ENCODE measurements at regions of chr20 and their contacts with region 1.

Region 1: GRCh38 chr20:58388882-58389323 is at the start of gene VAPB:
- DNase-seq: peak; percentile 95
- ATAC-seq: peak; percentile 99
- H3K4me3 ChIP-seq: peak within 1 kb of the TSS; percentile 77 to 95 (median 88)
- H3K27ac ChIP-seq: peak within 1 kb of the TSS; percentile 85
- H3K4me1 ChIP-seq: peaks cover 43% of the 10 kb centered on the region
- H3K27me3 ChIP-seq: no peaks in the 10 kb centered on the region
- CTCF ChIP-seq: peak; percentile 28; the same call in 1 of the 2 replicates
- EP300 ChIP-seq: no peak
- POLR2A ChIP-seq: peak in 1 of 2 experiments; percentile 87; a peak in 2 of 4 replicates
- RAD21 ChIP-seq: no peak
- total RNA-seq, gene VAPB: 18.6 and 39.5 TPM in 2 replicates

Region 2: DNA sequence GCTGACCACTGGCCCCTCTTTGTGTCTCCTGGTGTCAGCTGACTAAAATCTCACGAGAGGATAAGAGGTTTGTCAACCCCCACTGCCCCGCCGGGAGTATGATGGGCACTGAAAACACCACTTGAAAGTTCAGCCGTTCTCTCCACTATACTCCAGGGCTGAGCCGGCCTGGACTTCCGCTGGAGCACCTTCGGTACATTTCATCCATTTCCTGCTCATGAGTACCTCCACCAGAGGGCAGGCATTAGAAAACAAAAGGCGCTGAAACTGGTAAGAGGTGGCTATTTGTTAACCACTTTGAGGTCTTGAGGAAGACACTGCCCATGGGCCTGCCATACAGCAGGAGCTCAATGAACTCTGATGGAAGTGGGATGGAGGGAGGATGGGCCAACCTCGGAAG is 142.6 kb before region 1 on chr20:
- CTCF ChIA-PET with region 1: no interaction called
- POLR2A ChIA-PET with region 1: interaction called, 4 read pairs
- in situ Hi-C with region 1: no loop called
- intact Hi-C with region 1: loop called (anchors 5 kb)
- DNase-seq: peak; percentile 61
- ATAC-seq: peak; percentile 75
- H3K4me3 ChIP-seq: no peak overlapping the region
- H3K27ac ChIP-seq: no peak overlapping the region
- H3K4me1 ChIP-seq: peaks cover 2% of the 10 kb centered on the region; the same call in 1 of the 2 replicates
- H3K27me3 ChIP-seq: no peaks in the 10 kb centered on the region
- CTCF ChIP-seq: peak; percentile 71
- EP300 ChIP-seq: no peak
- POLR2A ChIP-seq: no peak
- RAD21 ChIP-seq: peak; percentile 32; the same call in 1 of the 2 replicates

Region 3: DNA sequence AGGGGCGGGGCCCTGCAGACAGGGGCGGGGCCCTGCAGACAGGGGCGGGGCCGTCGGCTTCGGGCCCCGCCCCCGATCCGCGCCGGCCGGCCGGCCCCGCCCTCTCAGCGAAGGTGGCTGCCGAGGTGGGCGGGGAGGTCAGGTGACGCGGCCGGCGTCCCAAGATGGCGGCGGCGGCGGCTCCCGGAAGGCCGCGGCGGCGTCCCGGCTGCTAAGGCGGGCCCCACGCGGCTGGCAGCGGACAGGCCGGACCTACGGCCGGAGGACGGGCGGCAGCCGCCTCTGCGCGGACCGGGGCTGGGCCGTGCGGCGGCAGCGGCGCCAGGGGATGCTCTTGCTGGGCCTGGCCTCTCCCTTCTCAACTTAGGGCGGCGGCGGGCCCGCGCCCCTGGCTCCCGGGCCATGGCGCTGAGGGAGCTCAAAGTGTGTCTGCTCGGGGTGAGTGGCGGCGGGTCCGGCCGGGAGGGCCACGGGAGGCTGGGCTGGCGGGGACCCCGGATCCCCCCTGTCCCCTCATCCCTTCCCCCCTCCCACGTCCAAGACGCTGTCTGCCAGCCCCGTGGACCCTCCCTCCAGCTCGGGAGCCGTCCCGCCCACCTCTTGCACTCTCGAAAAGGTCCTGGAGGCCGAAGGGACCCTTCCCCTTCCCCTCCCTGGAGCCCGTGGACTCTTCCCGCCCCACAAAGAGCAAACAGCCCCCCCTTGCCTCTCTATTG is 79.2 kb before region 1 on chr20 and contains the start of gene RAB22A:
- CTCF ChIA-PET with region 1: no interaction called
- POLR2A ChIA-PET with region 1: interaction called, 7 read pairs
- in situ Hi-C with region 1: no loop called
- intact Hi-C with region 1: loop called (anchors 5 kb)
- DNase-seq: peak; percentile 56
- ATAC-seq: peak; percentile 82
- H3K4me3 ChIP-seq: peak within 1 kb of the TSS; percentile 98 to 100 (median 99)
- H3K27ac ChIP-seq: peak within 1 kb of the TSS; percentile 65
- H3K4me1 ChIP-seq: peaks cover 40% of the 10 kb centered on the region
- H3K27me3 ChIP-seq: no peaks in the 10 kb centered on the region; a peak in 1 of 5 replicates
- CTCF ChIP-seq: no peak; the same call in 1 of the 2 replicates
- EP300 ChIP-seq: peak; percentile 8 to 37; a peak in 1 of 4 replicates
- POLR2A ChIP-seq: peak; percentile 67 to 72
- RAD21 ChIP-seq: peak; percentile 74
- total RNA-seq, gene RAB22A: 11.2 and 16.2 TPM in 2 replicates

Region 4: GRCh38 chr20:58407966-58408557 is 19.2 kb after region 1 on chr20:
- CTCF ChIA-PET with region 1: no interaction called
- POLR2A ChIA-PET with region 1: interaction called, 11 read pairs
- in situ Hi-C with region 1: no loop called
- intact Hi-C with region 1: loop called (anchors 1 kb)
- DNase-seq: no peak
- ATAC-seq: no peak; the same call in 2 of the 3 replicates
- H3K4me3 ChIP-seq: peak overlapping the region in 1 of 3 experiments; percentile 17; a peak in 1 of 6 replicates
- H3K27ac ChIP-seq: peak overlapping the region; percentile 41
- H3K4me1 ChIP-seq: peaks cover 81% of the 10 kb centered on the region
- H3K27me3 ChIP-seq: no peaks in the 10 kb centered on the region
- CTCF ChIP-seq: no peak
- EP300 ChIP-seq: no peak
- POLR2A ChIP-seq: no peak
- RAD21 ChIP-seq: no peak

Region 5: DNA sequence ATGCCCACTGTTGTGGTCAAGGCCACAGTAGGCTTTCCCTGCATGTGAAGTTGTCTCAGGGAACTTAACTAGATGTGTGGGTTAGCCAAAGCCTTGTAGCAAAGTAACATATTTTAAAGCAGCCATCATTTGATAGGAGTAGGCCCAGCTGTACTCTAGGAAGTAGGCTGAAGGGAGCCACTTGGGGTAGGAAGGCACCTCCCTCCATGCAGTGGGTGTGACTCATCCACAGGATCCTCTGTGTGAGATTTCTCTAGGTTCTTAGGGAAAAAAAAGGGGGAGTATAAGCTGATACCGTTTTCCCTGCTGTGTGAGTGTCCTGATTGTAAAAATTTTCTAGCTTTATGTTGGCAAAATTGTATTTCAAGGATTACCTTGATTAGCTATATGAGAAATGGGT is 44.9 kb after region 1 on chr20:
- CTCF ChIA-PET with region 1: no interaction called
- POLR2A ChIA-PET with region 1: interaction called, 3 read pairs
- in situ Hi-C with region 1: no loop called
- intact Hi-C with region 1: loop called (anchors 5 kb)
- DNase-seq: no peak
- ATAC-seq: no peak
- H3K4me3 ChIP-seq: no peak overlapping the region
- H3K27ac ChIP-seq: no peak overlapping the region
- H3K4me1 ChIP-seq: peaks cover 44% of the 10 kb centered on the region
- H3K27me3 ChIP-seq: no peaks in the 10 kb centered on the region
- CTCF ChIP-seq: no peak
- EP300 ChIP-seq: no peak
- POLR2A ChIP-seq: no peak
- RAD21 ChIP-seq: no peak